ENCODE measurements at regions of chr2 and their contacts with region 1.

Region 1: DNA sequence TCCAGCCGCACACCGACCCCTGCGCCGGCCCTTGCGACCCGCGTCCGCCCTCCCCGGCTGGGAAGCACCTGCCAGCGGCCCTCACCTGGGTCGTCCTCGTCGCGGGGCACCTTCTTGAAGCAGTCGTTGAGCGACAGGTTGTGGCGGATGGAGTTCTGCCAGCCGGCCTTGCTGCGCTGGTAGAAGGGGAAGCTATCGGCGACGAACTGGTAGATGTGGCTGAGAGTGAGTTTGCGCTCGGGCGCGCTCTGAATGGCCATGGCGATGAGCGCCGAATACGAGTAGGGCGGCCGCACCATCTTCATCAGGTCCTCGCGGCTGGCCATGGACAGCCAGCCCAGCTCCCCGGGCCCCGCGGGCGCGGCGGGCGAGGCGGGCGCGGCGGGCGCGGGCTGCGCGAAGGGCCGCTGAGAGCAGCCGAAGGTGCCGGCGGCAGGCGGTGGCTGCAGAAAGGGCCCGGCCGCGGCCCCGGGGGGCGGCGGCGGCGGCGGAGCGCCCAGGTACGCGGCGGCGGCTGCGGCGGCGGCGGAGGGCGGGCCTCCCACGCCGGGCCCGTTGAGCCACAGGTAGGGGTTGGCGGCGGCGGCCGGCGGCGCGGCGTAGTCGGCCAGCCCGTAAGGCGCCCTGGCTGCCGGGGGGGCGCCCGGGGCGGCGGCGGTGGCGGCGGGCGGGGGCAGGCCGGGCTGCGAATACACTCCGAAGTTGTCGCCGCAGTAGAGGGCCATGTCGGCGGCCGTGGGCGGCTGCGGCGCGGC is 505 bp downstream of the FOXI3 start:
- DNase-seq: peak; percentile 30
- ATAC-seq: peak; percentile 19
- H3K4me3 Mint-ChIP-seq: peak overlapping the region; percentile 49
- H3K27ac Mint-ChIP-seq: no peak overlapping the region
- H3K4me1 Mint-ChIP-seq: peaks cover 8% of the 10 kb centered on the region
- H3K27me3 Mint-ChIP-seq: peaks cover 56% of the 10 kb centered on the region

Region 2: GRCh38 chr2:88190808-88191721 is 260.9 kb before region 1 on chr2:
- CTCF ChIA-PET with region 1: no interaction called
- POLR2A ChIA-PET with region 1: no interaction called
- intact Hi-C with region 1: loop called in 1 of 2 experiments (anchors 5 kb)
- DNase-seq: peak; percentile 48
- ATAC-seq: no peak
- H3K4me3 Mint-ChIP-seq: no peak overlapping the region
- H3K27ac Mint-ChIP-seq: no peak overlapping the region
- H3K4me1 Mint-ChIP-seq: no peaks in the 10 kb centered on the region
- H3K27me3 Mint-ChIP-seq: peaks cover 22% of the 10 kb centered on the region

Region 3: DNA sequence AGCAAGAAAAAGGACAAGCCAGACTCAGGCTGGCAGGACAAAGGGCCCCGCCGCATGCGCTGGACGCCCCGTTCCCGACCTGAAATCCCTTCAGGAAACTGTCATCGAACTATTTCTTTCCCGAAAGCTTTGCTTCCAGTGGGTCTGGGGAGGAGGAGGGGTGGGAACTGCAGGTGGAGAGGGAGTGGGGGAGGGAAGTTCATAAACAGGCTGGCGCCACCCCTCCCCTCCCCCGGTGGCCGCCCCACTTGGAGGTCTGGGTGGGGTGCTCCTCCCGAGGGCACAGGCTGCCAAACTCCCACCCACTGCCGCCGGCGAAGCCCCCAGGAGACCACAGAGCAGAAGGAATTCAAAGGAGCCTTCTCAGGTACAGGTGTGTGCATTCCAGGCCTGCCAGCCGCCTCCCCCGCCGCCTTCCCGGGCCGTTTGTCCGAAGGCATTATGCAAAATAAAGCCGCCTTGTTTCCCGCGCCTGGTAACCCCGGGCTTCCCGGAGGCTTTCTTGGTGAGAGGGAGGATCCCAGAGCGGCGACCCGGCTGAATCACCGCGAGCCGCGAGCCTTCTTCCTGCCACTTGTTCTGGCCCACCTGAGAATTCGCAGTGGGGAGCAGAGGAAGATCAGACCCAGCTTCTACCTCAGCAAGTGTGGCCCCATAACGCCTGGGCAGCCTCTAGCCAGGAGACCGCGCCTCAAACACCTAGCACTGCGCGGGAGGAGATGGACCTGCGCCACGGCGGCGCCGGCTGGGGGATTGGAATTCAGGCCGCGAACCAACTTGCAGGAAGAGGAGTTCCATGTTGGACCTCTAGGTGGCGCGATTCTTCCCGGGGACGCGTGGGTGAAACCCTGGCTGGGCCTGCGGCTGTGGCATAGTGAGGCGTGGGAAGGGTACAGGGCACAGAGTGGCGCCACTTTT is 101.4 kb before region 1 on chr2:
- CTCF ChIA-PET with region 1: interaction called, 3 read pairs
- POLR2A ChIA-PET with region 1: no interaction called
- intact Hi-C with region 1: loop called in 1 of 2 experiments (anchors 5 kb)
- DNase-seq: peak; percentile 85
- ATAC-seq: peak; percentile 55
- H3K4me3 Mint-ChIP-seq: peak overlapping the region; percentile 40
- H3K27ac Mint-ChIP-seq: no peak overlapping the region
- H3K4me1 Mint-ChIP-seq: peaks cover 3% of the 10 kb centered on the region
- H3K27me3 Mint-ChIP-seq: peaks cover 32% of the 10 kb centered on the region

Measured in activated CD4-positive, alpha-beta T cell treated with anti-CD3 and anti-CD28 coated beads for 36 hours (primary cell).